Right ventricle myocardium inferior (tissue), 1 donor: ENCODE measurements at regions of chr22 and their contacts with region 1.

Region 1: DNA sequence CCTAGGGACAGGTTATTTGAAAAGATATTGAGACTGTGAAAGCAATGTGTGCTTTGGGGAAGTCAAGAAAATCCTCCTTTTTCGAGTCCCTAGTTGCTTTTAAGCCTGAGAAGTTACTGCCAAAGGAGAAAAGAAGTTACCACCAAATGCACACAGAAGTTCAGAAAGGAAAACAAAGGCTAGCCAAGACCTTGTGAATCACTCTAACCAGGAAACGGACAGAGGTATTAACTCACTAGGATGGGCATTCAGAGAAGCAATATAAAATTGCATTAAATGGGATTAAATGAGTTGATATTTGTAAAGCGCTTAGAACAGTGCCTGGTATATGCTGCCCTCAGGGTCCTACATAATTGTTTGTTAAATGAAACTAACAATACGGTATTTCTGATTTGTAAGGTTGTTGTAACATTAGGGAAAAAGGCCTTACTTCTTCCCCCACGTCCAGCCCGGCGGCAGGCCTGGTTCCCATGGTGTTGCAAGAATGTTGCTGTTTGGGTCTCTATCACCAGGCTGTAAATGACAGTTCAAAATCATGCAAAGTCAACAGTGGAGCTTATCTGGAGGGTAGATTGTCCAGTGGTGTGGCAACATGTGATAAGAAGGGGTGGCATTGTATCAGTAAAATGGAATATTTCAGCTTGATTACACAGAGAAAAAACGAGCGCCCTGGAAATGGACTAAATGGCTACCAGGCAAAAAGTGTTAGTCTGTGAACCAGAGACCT is 7.1 kb downstream of the TMA7B start:
- DNase-seq: no peak
- ATAC-seq: no peak

Region 2: GRCh38 chr22:40001800-40002577 is 34.7 kb after region 1 on chr22:
- intact Hi-C with region 1: loop called (anchors 5 kb)
- DNase-seq: peak; percentile 26
- ATAC-seq: no peak